ENCODE measurements at regions of chr16 and their contacts with region 1.

Region 1: GRCh38 chr16:3129137-3130131 is 5.4 kb upstream of the ZNF213 start:
- DNase-seq: peak; percentile 95
- H3K4me3 Mint-ChIP-seq: peak overlapping the region; percentile 93
- H3K27ac Mint-ChIP-seq: peak overlapping the region; percentile 87
- H3K4me1 Mint-ChIP-seq: peaks cover 48% of the 10 kb centered on the region
- H3K27me3 Mint-ChIP-seq: no peaks in the 10 kb centered on the region

Region 2: GRCh38 chr16:2936436-2937011 is 192.9 kb before region 1 on chr16:
- intact Hi-C with region 1: no loop called
- DNase-seq: no peak
- H3K4me3 Mint-ChIP-seq: no peak overlapping the region
- H3K27ac Mint-ChIP-seq: no peak overlapping the region
- H3K4me1 Mint-ChIP-seq: peaks cover 4% of the 10 kb centered on the region
- H3K27me3 Mint-ChIP-seq: no peaks in the 10 kb centered on the region

Region 3: GRCh38 chr16:3099732-3100499 is 29.5 kb before region 1 on chr16:
- intact Hi-C with region 1: loop called (anchors 1 kb)
- DNase-seq: peak; percentile 97
- H3K4me3 Mint-ChIP-seq: peak overlapping the region; percentile 85
- H3K27ac Mint-ChIP-seq: peak overlapping the region; percentile 86
- H3K4me1 Mint-ChIP-seq: peaks cover 38% of the 10 kb centered on the region
- H3K27me3 Mint-ChIP-seq: peaks cover 2% of the 10 kb centered on the region

Region 4: GRCh38 chr16:3166510-3166895 is 37.1 kb after region 1 on chr16:
- intact Hi-C with region 1: loop called (anchors 1 kb)
- DNase-seq: no peak
- H3K4me3 Mint-ChIP-seq: no peak overlapping the region
- H3K27ac Mint-ChIP-seq: no peak overlapping the region
- H3K4me1 Mint-ChIP-seq: peaks cover 23% of the 10 kb centered on the region
- H3K27me3 Mint-ChIP-seq: peaks cover 33% of the 10 kb centered on the region